ENCODE measurements at regions of chr2 and their contacts with region 1.

Region 1: GRCh38 chr2:224638301-224638823 is 53.2 kb upstream of the CUL3 start:
- DNase-seq: peak; percentile 66
- H3K4me3 Mint-ChIP-seq: peak overlapping the region; percentile 30
- H3K27ac Mint-ChIP-seq: peak overlapping the region; percentile 89
- H3K4me1 Mint-ChIP-seq: peaks cover 10% of the 10 kb centered on the region
- H3K27me3 Mint-ChIP-seq: peaks cover 2% of the 10 kb centered on the region

Region 2: DNA sequence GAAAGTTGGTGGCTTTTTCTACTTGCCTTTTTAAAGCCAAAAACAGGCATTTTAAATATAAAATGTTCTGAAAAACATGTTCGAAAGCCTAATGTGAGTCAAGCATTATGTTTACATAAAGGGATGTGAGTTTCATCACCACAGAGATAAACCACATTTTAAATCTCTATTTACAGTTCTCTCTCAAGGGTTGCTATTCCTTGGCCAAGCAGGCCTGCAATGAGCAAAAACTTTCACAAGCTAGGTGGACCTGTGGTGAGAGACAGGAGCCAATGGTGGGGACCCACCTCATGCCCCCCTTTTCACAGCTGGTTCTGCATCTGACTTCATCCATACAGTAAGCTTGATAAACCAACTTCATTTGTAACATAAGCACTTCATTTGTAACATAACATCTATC is 118.3 kb before region 1 on chr2:
- CTCF ChIA-PET with region 1: no interaction called
- POLR2A ChIA-PET with region 1: no interaction called
- intact Hi-C with region 1: loop called (anchors 5 kb)
- DNase-seq: peak; percentile 71
- H3K4me3 Mint-ChIP-seq: no peak overlapping the region
- H3K27ac Mint-ChIP-seq: peak overlapping the region; percentile 9
- H3K4me1 Mint-ChIP-seq: peaks cover 53% of the 10 kb centered on the region
- H3K27me3 Mint-ChIP-seq: no peaks in the 10 kb centered on the region

Region 3: DNA sequence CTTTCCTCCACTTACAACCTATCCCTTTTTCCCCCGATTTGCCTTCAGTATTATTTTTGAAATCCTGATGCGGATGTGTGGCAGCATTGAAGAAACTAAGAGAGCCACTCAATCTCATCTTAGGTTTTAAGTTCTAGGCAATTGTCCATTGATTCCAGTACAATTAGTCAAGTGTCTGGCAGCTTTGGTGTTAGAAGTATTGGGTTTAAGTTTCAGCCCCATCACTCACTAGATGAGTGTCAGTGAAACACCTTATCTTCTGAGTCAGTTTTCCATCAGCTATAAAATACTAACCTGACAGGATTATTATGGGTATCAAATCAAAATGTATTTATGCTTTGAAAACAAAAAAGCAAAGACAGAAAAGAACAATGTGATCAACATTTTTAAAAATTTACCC is 36.4 kb before region 1 on chr2:
- CTCF ChIA-PET with region 1: no interaction called
- POLR2A ChIA-PET with region 1: no interaction called
- intact Hi-C with region 1: loop called (anchors 5 kb)
- DNase-seq: no peak
- H3K4me3 Mint-ChIP-seq: no peak overlapping the region
- H3K27ac Mint-ChIP-seq: no peak overlapping the region
- H3K4me1 Mint-ChIP-seq: peaks cover 15% of the 10 kb centered on the region
- H3K27me3 Mint-ChIP-seq: peaks cover 11% of the 10 kb centered on the region

Measured in activated CD4-positive, alpha-beta memory T cell treated with anti-CD3 and anti-CD28 coated beads for 36 hours (primary cell).